Transverse colon (tissue), 4 donors: ENCODE measurements at regions of chr4 and their contacts with region 1.

Region 1: DNA sequence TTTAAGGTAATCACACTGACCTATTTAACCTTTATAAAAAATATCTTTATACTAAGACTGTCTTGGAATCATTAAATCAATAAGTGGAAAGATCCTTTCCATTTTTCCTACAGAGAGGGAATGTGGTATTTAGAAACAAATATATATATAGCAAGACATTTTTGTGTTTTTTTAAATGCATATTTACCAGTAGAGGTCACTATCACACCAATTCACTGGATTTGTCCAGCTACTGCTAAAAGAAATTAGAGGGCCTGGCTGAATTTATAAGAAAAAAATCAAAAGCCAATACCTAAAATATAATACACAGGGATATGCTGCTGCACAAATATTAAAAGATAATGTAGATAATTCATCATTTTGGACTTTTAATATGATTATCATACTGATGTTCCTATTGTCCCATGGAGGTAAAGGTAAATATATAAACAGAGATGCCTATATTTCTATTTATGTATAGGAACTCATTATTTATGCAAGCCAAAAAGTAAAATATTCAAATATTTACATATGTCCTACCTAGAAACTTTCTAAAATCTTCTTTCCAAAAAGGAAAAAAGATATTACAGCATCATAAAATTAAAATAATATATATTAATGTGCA is 69.5 kb downstream of the PDE5A start:
- DNase-seq: no peak
- H3K4me3 ChIP-seq: no peak overlapping the region
- H3K27ac ChIP-seq: no peak overlapping the region
- H3K4me1 ChIP-seq: no peaks in the 10 kb centered on the region
- H3K27me3 ChIP-seq: no peaks in the 10 kb centered on the region
- CTCF ChIP-seq: peak; percentile 47 to 63 (median 58)
- EP300 ChIP-seq: no peak
- POLR2A ChIP-seq: no peak

Region 2: GRCh38 chr4:119615068-119615719 is 56.0 kb after region 1 on chr4:
- in situ Hi-C with region 1: loop called in 2 of 4 experiments (anchors 10 kb)
- intact Hi-C with region 1: no loop called
- DNase-seq: no peak
- H3K4me3 ChIP-seq: no peak overlapping the region
- H3K27ac ChIP-seq: no peak overlapping the region
- H3K4me1 ChIP-seq: peaks cover 0 to 8% (median 0%) of the 10 kb centered on the region in 4 donors
- H3K27me3 ChIP-seq: no peaks in the 10 kb centered on the region
- CTCF ChIP-seq: no peak
- EP300 ChIP-seq: no peak
- POLR2A ChIP-seq: no peak

Region 3: GRCh38 chr4:119897260-119897659 is 338.1 kb after region 1 on chr4:
- in situ Hi-C with region 1: no loop called
- intact Hi-C with region 1: no loop called
- DNase-seq: no peak
- H3K4me3 ChIP-seq: no peak overlapping the region
- H3K27ac ChIP-seq: no peak overlapping the region
- H3K4me1 ChIP-seq: peaks cover 0 to 10% (median 0%) of the 10 kb centered on the region in 4 donors
- H3K27me3 ChIP-seq: no peaks in the 10 kb centered on the region
- CTCF ChIP-seq: no peak
- EP300 ChIP-seq: no peak
- POLR2A ChIP-seq: no peak